Aorta (tissue), 5 donors: ENCODE measurements at regions of chr15 and their contacts with region 1.

Region 1: DNA sequence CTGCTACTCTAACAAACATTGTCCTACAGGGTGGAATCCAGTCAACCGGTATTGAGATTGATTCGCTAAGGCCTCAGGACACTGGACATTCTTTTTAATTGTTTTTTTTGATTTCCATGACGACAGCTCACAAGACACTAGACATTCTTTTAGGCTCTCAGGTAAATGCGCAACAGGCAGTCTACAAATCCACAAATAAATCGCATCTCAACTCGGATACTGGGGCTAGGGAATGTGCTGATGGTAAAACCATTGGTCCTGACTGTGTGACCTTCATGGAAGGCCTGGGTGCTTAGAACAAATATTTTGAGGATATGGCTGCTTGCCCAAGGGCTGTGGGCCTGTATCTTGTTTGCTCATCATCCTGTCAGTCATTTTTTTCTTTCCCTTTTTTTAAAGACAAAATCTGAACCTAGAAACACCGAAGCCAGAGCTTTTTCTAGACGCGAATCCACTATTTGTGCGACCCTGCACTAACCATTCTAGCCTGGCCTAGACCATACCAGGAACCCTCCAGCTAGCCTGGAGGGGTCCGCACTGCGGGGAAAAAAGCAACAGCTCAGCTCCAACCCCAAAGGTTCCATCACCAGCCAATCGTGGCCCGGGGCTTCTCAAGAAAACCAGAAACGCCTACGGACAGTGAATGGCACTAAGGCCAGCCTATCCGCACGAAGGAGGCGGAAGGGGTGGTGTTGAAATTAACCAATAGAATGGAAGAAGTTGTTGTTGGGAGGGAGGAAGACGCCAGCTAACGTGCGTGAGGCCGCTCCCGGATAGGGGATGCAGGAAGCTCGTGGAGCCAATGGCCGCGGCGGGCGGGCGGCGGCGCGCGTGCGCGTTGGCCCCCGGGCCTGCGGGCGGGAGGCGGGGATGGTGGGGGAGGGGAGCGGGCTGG is 18.1 kb upstream of the CHD2 start:
- DNase-seq: peak; percentile 99
- ATAC-seq: peak; percentile 95
- H3K4me3 ChIP-seq: peak overlapping the region; percentile 37 to 75
- H3K27ac ChIP-seq: peak overlapping the region; percentile 94 to 99
- H3K4me1 ChIP-seq: no peaks in the 10 kb centered on the region
- H3K27me3 ChIP-seq: no peaks in the 10 kb centered on the region

Region 2: DNA sequence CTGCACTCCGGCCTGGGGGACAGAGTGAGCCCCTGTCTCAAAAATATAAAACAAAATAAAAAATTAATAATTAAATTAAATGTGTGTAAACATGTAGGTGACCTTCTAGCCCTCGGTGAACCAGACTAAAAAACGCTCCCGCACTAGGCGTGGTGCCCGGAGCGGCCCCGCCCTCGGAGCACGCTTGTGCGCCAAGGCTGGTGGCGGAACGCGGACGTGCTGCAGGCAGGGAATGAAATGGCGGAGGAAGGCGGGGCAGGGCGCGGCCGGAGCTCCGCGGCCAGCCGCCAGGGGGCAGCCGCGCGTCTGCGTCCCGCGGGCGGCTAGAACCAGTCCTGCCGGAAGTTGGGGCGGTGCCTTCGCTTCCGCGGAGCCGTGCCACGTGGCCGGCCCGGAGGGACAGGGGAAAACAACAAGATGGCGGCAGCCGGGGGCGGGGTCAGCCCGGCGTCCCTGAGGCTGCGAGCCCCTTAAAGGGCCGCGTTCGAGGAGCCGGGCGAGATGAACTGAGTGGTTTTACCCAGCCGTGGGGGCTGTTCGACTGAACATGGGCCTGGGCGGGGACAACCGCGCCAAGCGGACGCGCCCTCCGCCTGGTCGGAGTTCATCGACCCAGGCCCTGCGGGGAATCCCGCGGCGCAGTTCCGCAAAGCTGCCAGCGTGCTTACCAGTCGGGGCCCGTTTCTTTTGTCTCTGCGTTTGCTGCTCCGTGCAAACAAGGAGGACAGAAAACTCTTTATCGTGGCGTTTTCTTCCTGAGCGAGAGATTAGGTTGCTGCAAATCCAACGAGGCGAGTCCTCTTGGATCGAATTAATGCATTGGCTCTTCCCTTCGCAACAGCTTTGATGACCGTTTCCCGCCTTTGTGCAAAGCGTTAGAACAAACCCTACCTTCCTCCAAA is 72.8 kb before region 1 on chr15:
- intact Hi-C with region 1: loop called (anchors 2 to 5 kb)
- DNase-seq: peak; percentile 99
- ATAC-seq: peak; percentile 96
- H3K4me3 ChIP-seq: peak overlapping the region; percentile 20 to 22
- H3K27ac ChIP-seq: peak overlapping the region; percentile 92 to 98
- H3K4me1 ChIP-seq: no peaks in the 10 kb centered on the region
- H3K27me3 ChIP-seq: no peaks in the 10 kb centered on the region

Region 3: DNA sequence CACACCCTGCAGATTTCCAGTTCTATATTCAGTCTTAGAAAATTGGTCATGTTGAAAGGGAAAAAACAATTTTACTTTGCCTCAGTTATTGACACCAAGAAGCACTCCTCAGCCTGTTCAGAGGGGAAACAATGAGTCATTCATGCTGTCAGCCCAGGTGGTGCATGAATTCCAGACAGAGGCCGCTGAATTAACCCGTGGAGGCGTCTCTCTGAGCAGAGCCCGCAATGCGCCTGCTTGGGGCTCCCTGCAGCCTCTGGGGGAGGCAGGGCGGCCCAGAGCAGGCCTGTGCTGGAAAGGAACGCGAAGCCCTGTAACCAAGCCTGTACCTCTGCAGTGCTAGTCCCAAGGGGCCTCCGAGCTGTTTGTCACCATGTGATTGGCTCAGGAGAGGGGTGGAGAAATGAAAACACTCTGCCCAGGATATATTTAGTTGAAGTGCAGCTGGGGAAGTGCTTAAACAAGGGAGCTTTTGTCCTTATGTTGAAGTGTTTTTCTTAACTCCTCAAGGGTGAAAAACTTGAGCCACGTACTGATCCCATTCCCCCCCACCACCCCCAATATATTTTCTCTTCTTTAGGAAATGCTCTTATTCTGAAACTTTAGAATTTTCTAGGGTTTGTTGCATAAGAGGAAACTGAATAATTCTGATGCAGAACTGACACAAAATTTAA is 50.3 kb before region 1 on chr15:
- intact Hi-C with region 1: loop called (anchors 1 to 2 kb)
- DNase-seq: peak; percentile 92 to 94
- ATAC-seq: peak; percentile 96
- H3K4me3 ChIP-seq: peak overlapping the region; percentile 11 to 61
- H3K27ac ChIP-seq: peak overlapping the region; percentile 96 to 98
- H3K4me1 ChIP-seq: peaks cover 2 to 4% of the 10 kb centered on the region in 2 donors
- H3K27me3 ChIP-seq: no peaks in the 10 kb centered on the region

Region 4: DNA sequence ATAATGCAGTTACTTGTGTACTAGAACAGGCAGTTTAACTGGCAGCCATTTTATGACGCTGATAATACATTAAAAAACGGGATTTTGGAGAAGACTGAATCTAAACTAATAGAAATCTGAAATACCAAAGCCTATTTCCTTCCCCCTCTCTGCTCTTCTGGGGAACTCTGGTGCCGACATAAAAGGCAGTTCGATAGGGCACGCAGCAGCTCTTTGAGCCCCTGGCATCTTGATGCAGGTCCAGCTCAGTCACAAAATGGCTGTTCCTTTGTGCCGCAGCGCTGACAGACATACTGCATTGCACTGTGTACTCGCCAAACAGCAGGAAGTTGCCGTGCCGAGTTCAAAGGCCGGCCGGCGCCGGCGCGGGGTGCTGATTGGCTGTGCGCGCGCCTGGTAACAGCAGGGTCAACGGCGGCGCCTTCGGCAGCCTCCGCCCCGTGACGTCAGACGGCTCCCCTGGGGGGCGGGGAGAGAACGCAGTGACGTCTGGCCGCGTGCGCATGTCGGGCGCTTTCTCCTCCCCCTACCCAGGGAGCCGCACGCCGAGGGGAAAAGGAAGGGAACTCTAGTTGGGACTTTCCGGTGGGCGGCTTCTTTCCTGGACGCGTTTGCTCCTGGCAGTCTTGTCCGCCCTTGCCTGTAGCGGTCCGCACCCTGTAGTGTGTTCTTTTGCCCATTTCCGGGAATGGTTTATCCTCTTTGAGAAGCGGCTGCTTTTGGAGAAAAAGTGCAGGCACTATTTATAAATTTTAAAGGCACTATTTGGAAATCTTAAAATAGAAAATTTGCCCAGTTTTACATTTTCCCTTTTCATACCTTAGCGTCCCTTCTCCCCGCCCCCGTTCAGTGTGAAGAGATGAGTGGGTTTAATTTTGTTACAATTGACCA is 22.1 kb after region 1 on chr15:
- intact Hi-C with region 1: loop called in 1 of 2 experiments (anchors 2 kb)
- DNase-seq: peak; percentile 98 to 100
- ATAC-seq: peak; percentile 97
- H3K4me3 ChIP-seq: peak overlapping the region; percentile 65 to 92
- H3K27ac ChIP-seq: peak overlapping the region; percentile 92 to 100
- H3K4me1 ChIP-seq: peaks cover 0 to 5% of the 10 kb centered on the region in 2 donors
- H3K27me3 ChIP-seq: peaks cover 0 to 1% of the 10 kb centered on the region in 2 donors